Dorsolateral prefrontal cortex (tissue), 120 donors: ENCODE measurements at regions of chr3 and their contacts with region 1.

Region 1: DNA sequence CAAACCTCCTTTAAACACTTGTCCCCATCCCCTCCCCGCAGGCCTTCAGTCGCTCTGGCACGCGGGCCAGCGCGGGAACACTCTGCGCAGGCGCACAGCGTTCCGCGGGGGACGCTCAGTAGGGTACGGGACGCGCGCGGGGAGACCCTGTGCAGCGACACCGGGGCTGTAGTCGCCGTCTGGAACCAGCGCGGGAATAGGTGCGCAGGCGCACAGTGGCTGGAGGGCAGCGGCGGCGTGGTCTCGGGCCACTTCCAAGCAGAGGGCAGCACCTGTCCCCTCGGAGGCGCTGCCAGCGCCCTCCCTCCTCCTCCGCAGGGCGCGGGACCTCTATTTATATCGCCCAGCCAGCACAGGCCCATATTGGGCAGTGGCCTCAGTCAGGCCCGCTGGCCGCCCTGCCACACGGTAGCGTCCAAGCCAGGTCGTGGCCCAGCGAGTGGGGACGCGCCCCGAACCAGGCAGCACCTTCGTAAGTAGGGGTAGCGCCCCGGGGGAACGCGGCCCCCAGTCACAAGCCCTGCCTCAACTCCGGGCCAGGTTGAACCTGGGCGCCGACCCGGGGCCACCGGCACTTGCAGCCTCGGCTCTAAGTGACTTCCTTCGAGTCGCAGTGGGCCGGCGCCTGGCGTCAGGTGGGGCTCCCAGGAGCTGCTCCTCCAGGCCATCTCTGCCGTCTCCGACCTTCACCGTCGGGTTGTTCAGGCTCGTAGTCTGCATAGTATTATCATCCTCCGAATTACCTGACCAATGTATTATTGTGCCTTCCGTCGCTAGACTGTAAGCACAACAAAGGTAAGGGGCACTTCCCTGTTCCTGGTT is at the start of gene KBTBD12:
- DNase-seq: peak in 8 of 10 donors; percentile 35 to 78 (median 54)
- H3K4me3 ChIP-seq: peak within 1 kb of the TSS; percentile 32 to 80 (median 63)
- H3K27ac ChIP-seq: peak within 1 kb of the TSS in 56 of 59 donors; percentile 4 to 92 (median 76)
- H3K27me3 ChIP-seq: peaks cover 0 to 4% (median 0%) of the 10 kb centered on the region in 45 donors
- CTCF ChIP-seq: peak in 3 of 56 donors; percentile 8 to 14 (median 11)
- total RNA-seq, gene KBTBD12: 3.7 to 16.3 (median 8.3) TPM

Region 2: GRCh38 chr3:127786353-127787070 is 128.8 kb before region 1 on chr3:
- intact Hi-C with region 1: loop called in 1 of 2 experiments (anchors 10 kb)
- DNase-seq: peak; percentile 69 to 97 (median 86)
- H3K4me3 ChIP-seq: peak overlapping the region in 12 of 59 donors; percentile 2 to 31 (median 16)
- H3K27ac ChIP-seq: peak overlapping the region in 58 of 59 donors; percentile 46 to 96 (median 86)
- H3K27me3 ChIP-seq: no peaks in the 10 kb centered on the region
- CTCF ChIP-seq: no peak